ENCODE measurements at regions of chr22 and their contacts with region 1.

Region 1: GRCh38 chr22:39395936-39396796 is 3.4 kb upstream of the TAB1 start:
- DNase-seq: no peak

Region 2: GRCh38 chr22:38097557-38098409 is 1298.4 kb before region 1 on chr22:
- intact Hi-C with region 1: no loop called
- DNase-seq: no peak

Region 3: GRCh38 chr22:39514373-39514973 is 118.3 kb after region 1 on chr22:
- intact Hi-C with region 1: loop called (anchors 2 kb)
- DNase-seq: no peak

Measured in cardiac septum (tissue), 1 donor.